ENCODE measurements at regions of chr19 and their contacts with region 1.

Region 1: DNA sequence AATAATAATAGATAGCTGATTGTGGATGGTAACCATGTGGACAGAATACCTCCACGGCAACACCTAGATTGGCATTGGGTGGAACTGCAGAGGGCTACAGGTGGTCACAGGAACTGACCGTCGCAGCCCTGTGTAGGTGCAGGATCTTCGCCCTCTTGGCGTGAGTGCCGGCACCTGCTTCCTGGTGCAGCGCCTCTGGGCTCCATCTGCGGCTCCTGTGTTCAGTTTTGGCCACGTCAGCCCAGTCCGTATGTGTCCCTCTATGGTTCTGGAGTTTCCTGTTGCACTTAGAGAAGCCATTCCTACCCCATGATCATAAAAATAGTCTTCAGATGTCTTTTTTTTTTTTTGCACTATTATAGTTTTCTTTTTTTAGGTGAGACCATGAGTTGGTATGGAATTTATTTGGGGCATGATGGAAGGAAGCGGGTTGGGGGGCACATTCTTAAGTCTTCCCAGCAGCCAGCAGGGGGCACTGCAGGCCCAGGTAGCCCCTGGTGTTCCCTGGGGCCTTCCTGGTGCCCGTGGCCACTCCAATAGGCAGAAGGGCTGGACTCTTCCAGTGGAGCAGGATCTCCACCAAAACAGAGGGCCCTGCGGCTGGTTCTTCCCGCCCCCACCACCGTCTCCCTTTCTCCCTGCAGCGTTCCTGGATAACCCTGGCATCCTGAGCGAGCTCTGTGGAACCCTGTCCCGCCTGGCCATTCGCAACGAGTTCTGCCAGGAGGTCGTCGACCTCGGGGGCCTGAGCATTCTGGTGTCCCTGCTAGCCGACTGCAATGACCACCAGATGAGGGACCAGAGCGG is 10.1 kb upstream of the SLC25A42 start:
- DNase-seq: peak in 1 of 2 donors; percentile 72
- ATAC-seq: peak; percentile 84

Region 2: DNA sequence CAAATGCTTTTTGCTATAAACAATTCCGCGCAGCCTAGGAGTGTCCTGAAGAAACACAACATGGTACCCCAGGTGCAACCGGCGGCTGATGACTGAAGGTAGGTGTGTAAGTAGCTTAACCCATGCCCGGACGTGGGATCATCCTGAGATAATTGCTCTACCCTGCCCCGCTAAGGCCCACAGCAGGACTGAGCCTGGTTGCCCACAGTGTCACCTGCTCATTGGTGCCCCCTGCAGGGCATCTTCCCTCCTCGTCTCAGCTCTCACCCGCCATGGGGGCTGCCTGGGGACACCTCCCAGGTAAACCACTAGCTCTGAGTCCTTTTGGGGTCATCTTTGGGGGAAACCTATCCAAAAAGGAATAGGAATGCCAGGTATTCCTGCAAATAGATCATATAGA is 62.2 kb after region 1 on chr19:
- intact Hi-C with region 1: loop called in 1 of 2 experiments (anchors 10 kb)
- DNase-seq: peak in 1 of 2 donors; percentile 68
- ATAC-seq: no peak

Region 3: DNA sequence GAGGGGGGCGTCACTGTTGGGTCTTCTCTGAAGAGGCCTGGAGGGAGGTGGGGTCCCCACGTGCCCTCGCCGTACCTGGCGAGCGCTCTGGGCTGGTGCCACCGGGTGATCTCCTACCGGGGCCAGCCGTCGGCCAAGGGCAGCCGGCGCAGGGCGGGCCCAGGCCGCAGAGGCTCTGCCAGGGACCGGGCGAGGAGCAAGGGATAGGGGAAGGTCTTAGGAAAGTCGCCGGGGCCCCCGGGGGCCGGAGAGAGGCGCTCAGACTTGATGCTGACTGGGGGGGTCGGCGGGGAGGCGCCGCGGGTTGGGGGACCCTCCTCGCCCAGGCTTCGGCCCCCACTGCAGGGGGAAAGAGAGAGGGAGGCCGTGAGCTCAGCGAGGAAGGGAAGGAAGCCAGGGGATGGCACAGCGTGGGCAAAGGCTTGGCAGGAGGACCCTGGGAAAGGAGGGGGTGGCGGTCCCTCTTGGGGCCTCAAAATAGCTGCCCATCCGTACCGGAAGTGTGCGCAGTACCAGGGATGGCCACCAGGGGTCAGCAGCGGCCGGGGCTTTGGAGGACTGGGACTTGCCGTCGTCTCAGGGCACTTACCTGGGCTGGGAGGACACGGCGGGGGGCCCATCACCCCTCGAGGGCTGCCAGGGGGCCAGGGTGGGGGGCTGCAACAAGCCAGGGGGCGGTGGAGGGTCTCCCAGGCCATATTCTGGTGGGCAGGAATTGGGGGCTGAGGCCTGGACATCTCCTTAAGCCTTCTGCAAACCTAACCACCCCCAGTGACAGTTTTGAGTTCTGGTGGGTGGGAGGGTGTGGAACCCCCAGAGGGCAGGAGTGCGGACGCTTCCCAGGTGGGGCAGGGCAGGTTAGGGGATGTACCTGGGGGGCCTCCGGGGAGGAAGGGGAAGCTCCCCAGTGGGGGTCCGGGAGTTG is 92.2 kb after region 1 on chr19:
- intact Hi-C with region 1: loop called in 1 of 2 experiments (anchors 10 kb)
- DNase-seq: peak; percentile 57 to 87
- ATAC-seq: peak; percentile 83